ENCODE measurements at regions of chr3 and their contacts with region 1.

Region 1: GRCh38 chr3:78091478-78092119 is 1051.7 kb downstream of the ROBO2 start:
- DNase-seq: no peak

Region 2: GRCh38 chr3:78048698-78049097 is 42.9 kb before region 1 on chr3:
- intact Hi-C with region 1: loop called (anchors 5 kb)
- DNase-seq: no peak

Region 3: DNA sequence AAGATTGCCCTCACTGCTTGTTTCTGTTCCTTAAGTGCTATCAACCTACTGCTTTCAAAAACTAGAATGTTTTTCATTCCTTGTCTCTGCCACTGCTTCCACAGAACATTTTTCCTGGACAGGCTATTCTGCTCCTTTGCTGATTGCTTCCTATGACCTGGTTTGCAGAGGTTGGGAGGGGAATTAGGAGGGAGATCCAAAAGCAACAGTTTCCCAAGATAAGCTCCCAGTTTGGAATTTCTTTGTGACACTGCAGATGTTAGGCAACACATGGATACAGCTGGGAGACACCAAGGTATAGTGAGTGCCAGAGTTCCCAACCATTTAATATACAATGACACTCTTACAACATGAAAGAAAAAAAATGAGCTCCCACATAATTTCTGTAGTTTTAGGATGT is 15.2 kb before region 1 on chr3:
- intact Hi-C with region 1: no loop called
- DNase-seq: no peak

Region 4: DNA sequence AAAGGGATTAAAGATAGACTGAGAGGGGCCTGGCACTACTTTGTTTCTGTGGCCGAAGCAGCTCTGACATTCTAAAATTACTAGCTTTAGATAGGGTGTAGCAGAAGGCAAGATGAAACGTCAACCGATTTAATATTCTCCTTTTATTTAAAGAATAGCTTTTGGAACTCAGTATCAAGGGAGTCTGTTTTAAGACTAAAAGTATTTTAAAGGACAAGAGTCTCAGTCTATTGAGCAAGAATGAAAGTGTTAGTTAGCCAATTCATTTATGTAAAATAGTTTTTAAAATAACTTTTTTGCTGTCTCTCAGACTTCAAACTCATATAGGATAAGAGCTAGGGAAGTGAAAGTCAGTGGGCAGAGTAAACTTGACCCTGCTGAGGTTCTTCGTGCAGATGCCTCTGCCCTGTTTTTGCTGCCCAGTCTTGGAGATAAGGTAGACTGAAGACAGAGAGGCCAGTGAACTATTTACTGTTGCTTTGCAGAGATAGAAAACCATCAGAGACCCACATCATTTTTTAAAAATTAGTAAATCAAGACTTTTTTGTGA is 39.2 kb after region 1 on chr3:
- intact Hi-C with region 1: no loop called
- DNase-seq: no peak

Measured in cardiac septum (tissue), 1 donor.